ENCODE measurements at regions of chr4 and their contacts with region 1.

Region 1: GRCh38 chr4:77146186-77147078 is 10.6 kb upstream of the CCNG2 start:
- DNase-seq: peak; percentile 48
- H3K4me3 Mint-ChIP-seq: peak overlapping the region; percentile 44
- H3K27ac Mint-ChIP-seq: peak overlapping the region; percentile 68
- H3K4me1 Mint-ChIP-seq: peaks cover 26% of the 10 kb centered on the region
- H3K27me3 Mint-ChIP-seq: no peaks in the 10 kb centered on the region
- CTCF ChIP-seq: no peak

Region 2: DNA sequence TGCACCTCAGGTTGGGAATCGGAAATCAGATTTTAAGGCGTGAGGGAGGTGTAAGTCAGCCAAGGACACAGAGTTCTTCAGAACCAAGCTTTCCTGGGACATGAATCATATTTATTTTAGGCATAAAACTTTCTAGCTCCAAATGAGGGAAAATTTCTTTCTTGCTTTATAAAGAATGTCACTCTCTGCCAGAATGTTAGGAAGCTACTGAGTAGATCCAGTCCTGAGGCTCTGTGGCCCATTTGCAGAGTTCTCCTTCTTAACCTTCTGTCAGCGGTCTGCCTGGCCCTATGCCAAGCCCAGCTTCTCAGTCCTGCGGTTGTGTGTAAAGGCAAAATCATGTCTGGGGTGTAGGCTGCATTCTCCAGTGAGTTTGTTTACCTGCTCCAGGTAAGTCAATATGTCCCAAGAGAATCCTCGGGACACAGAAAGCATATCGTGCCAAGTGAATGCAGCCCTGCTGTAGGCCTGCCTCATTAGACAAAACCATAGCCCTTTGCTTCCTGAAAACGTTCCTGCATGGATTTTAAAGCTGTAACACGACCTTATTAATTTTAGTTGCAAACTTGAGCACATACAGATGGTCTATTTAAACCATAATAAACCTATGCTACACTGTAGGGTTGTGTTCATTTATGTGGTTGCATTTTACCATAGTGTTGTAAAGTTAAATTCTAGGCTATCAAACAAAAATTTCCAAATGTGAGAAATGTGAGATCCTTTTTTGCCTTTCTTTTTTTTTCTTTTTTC is 41.5 kb before region 1 on chr4:
- CTCF ChIA-PET with region 1: interaction called, 4 read pairs
- POLR2A ChIA-PET with region 1: interaction called, 248 read pairs
- intact Hi-C with region 1: no loop called
- DNase-seq: peak; percentile 58
- H3K4me3 Mint-ChIP-seq: peak overlapping the region; percentile 56
- H3K27ac Mint-ChIP-seq: peak overlapping the region; percentile 90
- H3K4me1 Mint-ChIP-seq: peaks cover 14% of the 10 kb centered on the region
- H3K27me3 Mint-ChIP-seq: no peaks in the 10 kb centered on the region
- CTCF ChIP-seq: no peak

Region 3: DNA sequence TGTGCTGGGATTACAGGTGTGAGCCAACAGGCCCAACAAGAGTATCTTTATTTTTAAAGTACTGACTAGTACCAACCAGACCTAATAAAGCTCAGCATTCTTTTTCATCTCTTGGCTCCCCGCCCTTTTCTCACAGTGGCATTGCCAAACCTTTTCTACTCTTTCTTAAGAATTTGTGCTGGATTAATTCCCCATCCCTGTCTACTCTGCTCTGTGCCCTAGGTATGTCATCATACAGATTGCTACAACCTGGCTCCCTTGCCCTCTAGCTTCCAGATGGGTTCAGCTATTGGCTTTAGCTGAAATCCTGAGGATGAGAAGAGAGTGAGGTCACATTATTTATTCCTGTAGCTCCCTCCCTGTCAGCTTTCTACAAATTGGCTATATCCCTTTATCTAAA is 35.7 kb before region 1 on chr4:
- CTCF ChIA-PET with region 1: no interaction called
- POLR2A ChIA-PET with region 1: interaction called, 248 read pairs
- intact Hi-C with region 1: no loop called
- DNase-seq: peak; percentile 55
- H3K4me3 Mint-ChIP-seq: no peak overlapping the region
- H3K27ac Mint-ChIP-seq: no peak overlapping the region
- H3K4me1 Mint-ChIP-seq: peaks cover 10% of the 10 kb centered on the region
- H3K27me3 Mint-ChIP-seq: no peaks in the 10 kb centered on the region
- CTCF ChIP-seq: no peak

Region 4: DNA sequence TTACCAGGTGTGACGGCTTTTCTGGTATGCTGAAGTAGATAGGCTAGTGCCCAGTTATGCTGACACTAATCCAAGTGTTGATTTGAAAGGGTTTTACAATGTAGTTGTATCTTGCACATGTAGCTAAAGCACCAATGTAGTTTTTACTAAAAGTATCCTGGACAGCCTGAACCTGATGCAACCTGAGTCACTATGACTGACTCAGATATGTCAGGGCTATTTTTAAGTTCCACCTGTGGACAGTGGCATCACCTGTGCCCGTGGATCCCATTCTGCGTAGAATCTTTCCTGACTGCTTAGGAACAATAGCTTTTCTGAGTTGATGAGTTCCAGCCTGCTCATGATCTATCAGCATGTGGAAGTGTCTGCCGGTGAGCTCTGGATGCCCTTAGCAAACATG is 68.7 kb after region 1 on chr4:
- CTCF ChIA-PET with region 1: no interaction called
- POLR2A ChIA-PET with region 1: no interaction called
- intact Hi-C with region 1: no loop called
- DNase-seq: no peak
- H3K4me3 Mint-ChIP-seq: no peak overlapping the region
- H3K27ac Mint-ChIP-seq: no peak overlapping the region
- H3K4me1 Mint-ChIP-seq: no peaks in the 10 kb centered on the region
- H3K27me3 Mint-ChIP-seq: no peaks in the 10 kb centered on the region
- CTCF ChIP-seq: no peak

Region 5: GRCh38 chr4:77273412-77273811 is 127.0 kb after region 1 on chr4:
- CTCF ChIA-PET with region 1: no interaction called
- POLR2A ChIA-PET with region 1: no interaction called
- intact Hi-C with region 1: no loop called
- DNase-seq: no peak
- H3K4me3 Mint-ChIP-seq: no peak overlapping the region
- H3K27ac Mint-ChIP-seq: no peak overlapping the region
- H3K4me1 Mint-ChIP-seq: no peaks in the 10 kb centered on the region
- H3K27me3 Mint-ChIP-seq: no peaks in the 10 kb centered on the region
- CTCF ChIP-seq: no peak

Measured in MCF 10A (cell line).